ENCODE measurements at regions of chr11 and their contacts with region 1.

Region 1: DNA sequence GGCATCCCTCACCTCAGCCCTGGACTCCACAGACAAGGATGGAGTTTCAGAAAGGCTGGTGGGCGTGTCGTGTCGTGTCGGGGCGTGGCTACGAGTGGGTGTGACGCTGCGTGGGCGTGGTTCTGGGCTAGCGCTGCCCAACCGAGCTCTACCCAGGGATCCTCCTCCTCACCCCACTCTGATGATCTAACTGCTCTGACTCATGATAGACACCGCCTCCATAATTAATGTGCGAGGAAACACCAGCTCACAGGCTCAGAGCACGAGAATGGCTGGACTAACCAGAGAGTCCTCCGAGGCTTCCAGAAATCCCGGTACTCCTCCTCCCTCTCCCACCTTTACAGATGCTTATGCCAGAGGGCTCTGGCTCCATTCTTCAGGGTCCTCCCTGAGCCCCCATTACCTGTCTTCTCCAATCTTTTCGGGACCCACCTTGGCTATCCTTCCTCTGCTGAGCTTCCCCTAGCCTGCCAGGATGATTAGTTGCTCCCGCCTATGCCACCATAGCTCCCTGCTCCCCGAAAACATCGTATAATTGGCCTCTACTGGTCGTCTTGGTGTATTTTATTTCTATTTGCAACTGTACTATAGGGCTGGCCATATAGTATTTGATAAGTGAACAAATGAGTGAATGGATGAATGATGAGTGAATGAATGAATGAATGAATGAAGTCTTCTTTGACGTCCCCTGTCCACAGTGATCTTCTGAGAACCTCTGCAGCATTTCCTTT is 21.8 kb downstream of the TMPRSS13 start:
- DNase-seq: peak; percentile 94
- H3K4me3 ChIP-seq: no peak overlapping the region
- H3K27ac ChIP-seq: peak overlapping the region; percentile 49
- H3K4me1 ChIP-seq: peaks cover 5% of the 10 kb centered on the region
- H3K27me3 ChIP-seq: no peaks in the 10 kb centered on the region
- CTCF ChIP-seq: no peak
- POLR2A ChIP-seq: no peak

Region 2: GRCh38 chr11:117058761-117059261 is 848.6 kb before region 1 on chr11:
- CTCF ChIA-PET with region 1: no interaction called
- POLR2A ChIA-PET with region 1: no interaction called
- dilution Hi-C with region 1: no loop called
- intact Hi-C with region 1: no loop called
- DNase-seq: peak; percentile 84
- H3K4me3 ChIP-seq: peak overlapping the region in 1 of 3 experiments; percentile 13
- H3K27ac ChIP-seq: peak overlapping the region; percentile 42
- H3K4me1 ChIP-seq: peaks cover 17% of the 10 kb centered on the region
- H3K27me3 ChIP-seq: no peaks in the 10 kb centered on the region
- CTCF ChIP-seq: no peak
- POLR2A ChIP-seq: no peak

Region 3: DNA sequence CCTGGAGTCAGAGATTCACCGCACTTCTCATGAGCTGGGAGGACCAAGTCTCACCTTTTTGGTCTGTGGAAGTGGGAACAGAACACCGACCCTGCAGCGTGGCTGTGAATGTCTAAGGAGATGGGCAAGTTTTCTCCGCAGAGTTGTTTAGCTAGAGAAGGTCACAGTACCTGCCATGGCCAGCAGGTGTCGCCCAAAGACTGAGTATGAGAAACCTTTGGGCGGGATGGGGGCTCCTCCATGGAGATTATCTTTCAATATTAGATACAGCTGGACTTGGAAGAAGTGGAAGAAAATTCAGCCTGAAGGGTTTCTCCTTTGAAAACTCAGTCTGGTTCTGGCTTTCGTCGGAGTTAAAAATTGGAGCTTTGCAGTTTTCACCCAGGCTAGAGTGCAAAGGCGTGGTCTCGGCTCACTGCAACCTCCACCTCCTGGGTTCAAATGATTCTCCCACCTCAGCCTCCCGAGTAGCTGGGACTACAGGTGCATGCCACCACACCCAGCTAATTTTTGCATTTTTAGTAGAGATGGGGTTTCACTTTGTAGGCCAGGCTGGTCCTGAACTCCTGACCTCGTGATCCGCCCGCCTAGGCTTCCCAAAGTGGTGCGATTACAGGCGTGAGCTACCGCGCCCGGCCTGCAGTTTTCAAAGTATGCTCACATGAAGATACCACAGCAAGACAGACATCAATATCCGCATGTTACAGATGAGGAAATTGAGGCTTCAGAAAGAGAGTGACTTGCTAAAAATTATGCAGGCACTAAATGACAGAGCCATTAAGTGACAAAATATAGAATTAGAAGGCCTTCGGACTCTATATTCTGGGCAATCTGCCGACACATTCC is 99.7 kb before region 1 on chr11:
- CTCF ChIA-PET with region 1: interaction called, 13 read pairs
- POLR2A ChIA-PET with region 1: no interaction called
- dilution Hi-C with region 1: no loop called
- intact Hi-C with region 1: no loop called
- DNase-seq: peak; percentile 47
- H3K4me3 ChIP-seq: no peak overlapping the region
- H3K27ac ChIP-seq: no peak overlapping the region
- H3K4me1 ChIP-seq: no peaks in the 10 kb centered on the region
- H3K27me3 ChIP-seq: peaks cover 1 to 5% of the 10 kb centered on the region in 2 experiments
- CTCF ChIP-seq: peak; percentile 81 to 92
- POLR2A ChIP-seq: no peak

Region 4: DNA sequence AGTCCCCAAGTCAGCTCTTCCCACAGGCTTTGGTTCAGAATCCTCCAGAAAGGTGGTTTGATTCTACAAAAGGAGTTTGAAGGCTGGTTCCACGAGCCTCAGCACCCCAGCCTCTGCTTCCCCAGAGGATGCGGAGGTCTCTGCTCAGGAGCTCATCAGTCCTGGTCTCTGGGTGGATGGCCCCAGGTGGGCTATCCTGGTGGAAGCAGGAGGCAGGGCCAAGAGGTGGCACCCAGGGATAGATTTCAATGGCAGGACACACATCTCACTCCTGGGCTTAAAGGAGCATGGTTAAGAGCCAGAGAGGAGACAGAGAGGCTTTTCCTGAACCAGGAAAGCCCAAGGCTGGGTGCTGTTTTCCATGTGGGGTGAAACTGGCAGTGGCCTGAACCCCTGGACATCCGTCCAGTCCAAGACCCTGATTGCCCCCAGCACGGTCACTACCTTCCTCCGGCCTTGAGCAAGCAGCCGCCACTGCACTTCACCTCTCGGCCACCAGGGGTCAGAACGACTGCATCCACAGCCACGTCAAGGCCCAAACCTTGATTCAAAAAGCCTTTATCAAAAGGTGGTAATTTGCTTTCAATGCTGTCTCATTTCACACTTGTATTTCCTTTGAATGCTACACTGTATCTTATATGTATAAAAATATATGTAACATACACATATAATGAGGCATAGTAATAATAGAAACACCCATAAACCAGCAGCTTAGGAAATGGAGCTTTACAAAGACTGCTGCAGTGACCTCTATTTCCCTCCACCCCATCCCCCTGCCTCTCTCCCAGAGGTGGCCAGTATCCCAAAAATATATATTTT is 63.5 kb before region 1 on chr11:
- CTCF ChIA-PET with region 1: interaction called, 28 read pairs
- POLR2A ChIA-PET with region 1: no interaction called
- dilution Hi-C with region 1: no loop called
- intact Hi-C with region 1: loop called (anchors 1 kb)
- DNase-seq: peak; percentile 69
- H3K4me3 ChIP-seq: no peak overlapping the region
- H3K27ac ChIP-seq: no peak overlapping the region
- H3K4me1 ChIP-seq: no peaks in the 10 kb centered on the region
- H3K27me3 ChIP-seq: peaks cover 0 to 2% of the 10 kb centered on the region in 2 experiments
- CTCF ChIP-seq: peak; percentile 92 to 95
- POLR2A ChIP-seq: no peak

Region 5: DNA sequence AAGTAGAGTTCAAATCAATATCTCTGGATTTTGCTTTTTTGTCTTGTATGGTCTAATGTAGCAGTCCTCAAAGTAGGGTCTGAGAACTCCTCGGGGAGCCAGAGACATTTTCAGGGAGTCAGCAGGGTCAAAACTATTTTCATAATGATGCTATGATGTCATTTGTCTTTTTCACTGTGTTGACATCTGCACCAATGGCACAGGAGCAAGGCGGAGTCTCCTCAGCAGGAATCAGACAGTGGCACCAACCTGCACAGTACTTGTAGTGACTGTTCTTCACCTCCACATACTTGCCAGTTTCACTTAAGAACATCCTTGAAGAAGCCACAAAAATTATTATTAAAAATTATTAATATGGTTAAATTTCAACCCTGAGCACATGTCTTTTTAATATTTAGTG is 16.1 kb before region 1 on chr11:
- CTCF ChIA-PET with region 1: interaction called, 16 read pairs
- POLR2A ChIA-PET with region 1: no interaction called
- dilution Hi-C with region 1: no loop called
- intact Hi-C with region 1: no loop called
- DNase-seq: no peak
- H3K4me3 ChIP-seq: no peak overlapping the region
- H3K27ac ChIP-seq: no peak overlapping the region
- H3K4me1 ChIP-seq: no peaks in the 10 kb centered on the region
- H3K27me3 ChIP-seq: peaks cover 3 to 13% of the 10 kb centered on the region in 2 experiments
- CTCF ChIP-seq: no peak
- POLR2A ChIP-seq: no peak

Region 6: GRCh38 chr11:117919781-117920221 is 12.4 kb after region 1 on chr11:
- CTCF ChIA-PET with region 1: interaction called, 16 read pairs
- POLR2A ChIA-PET with region 1: no interaction called
- dilution Hi-C with region 1: no loop called
- intact Hi-C with region 1: no loop called
- DNase-seq: no peak
- H3K4me3 ChIP-seq: no peak overlapping the region
- H3K27ac ChIP-seq: no peak overlapping the region
- H3K4me1 ChIP-seq: no peaks in the 10 kb centered on the region
- H3K27me3 ChIP-seq: no peaks in the 10 kb centered on the region
- CTCF ChIP-seq: no peak
- POLR2A ChIP-seq: no peak

Region 7: GRCh38 chr11:117970400-117971024 is 63.1 kb after region 1 on chr11:
- CTCF ChIA-PET with region 1: no interaction called
- POLR2A ChIA-PET with region 1: no interaction called
- dilution Hi-C with region 1: no loop called
- intact Hi-C with region 1: no loop called
- DNase-seq: peak; percentile 50
- H3K4me3 ChIP-seq: no peak overlapping the region
- H3K27ac ChIP-seq: no peak overlapping the region
- H3K4me1 ChIP-seq: peaks cover 28% of the 10 kb centered on the region
- H3K27me3 ChIP-seq: no peaks in the 10 kb centered on the region
- CTCF ChIP-seq: no peak
- POLR2A ChIP-seq: no peak

Region 8: GRCh38 chr11:118145285-118146227 is 238.1 kb after region 1 on chr11:
- CTCF ChIA-PET with region 1: no interaction called
- POLR2A ChIA-PET with region 1: no interaction called
- dilution Hi-C with region 1: no loop called
- intact Hi-C with region 1: no loop called
- DNase-seq: peak; percentile 59
- H3K4me3 ChIP-seq: peak overlapping the region; percentile 19 to 44 (median 43)
- H3K27ac ChIP-seq: no peak overlapping the region
- H3K4me1 ChIP-seq: no peaks in the 10 kb centered on the region
- H3K27me3 ChIP-seq: peaks cover 40 to 47% of the 10 kb centered on the region in 2 experiments
- CTCF ChIP-seq: peak; percentile 86 to 90
- POLR2A ChIP-seq: no peak